CD14-positive monocyte (primary cell): ENCODE measurements at regions of chr22 and their contacts with region 1.

Region 1: GRCh38 chr22:39532215-39533071 is at the start of gene RPS19BP1:
- DNase-seq: peak; percentile 96 to 98 (median 96)
- H3K4me3 ChIP-seq: peak within 1 kb of the TSS; percentile 77 to 90 (median 81)
- H3K4me3 Mint-ChIP-seq: peak within 1 kb of the TSS; percentile 85 to 94
- H3K27ac ChIP-seq: peak within 1 kb of the TSS; percentile 75 to 85
- H3K27ac Mint-ChIP-seq: peak within 1 kb of the TSS; percentile 85 to 94 (median 90)
- H3K4me1 ChIP-seq: peaks cover 48 to 61% of the 10 kb centered on the region in 2 donors
- H3K4me1 Mint-ChIP-seq: peaks cover 51% of the 10 kb centered on the region
- H3K27me3 ChIP-seq: no peaks in the 10 kb centered on the region
- H3K27me3 Mint-ChIP-seq: peaks cover 0 to 3% (median 2%) of the 10 kb centered on the region in 3 donors
- CTCF ChIP-seq: no peak
- polyA plus RNA-seq, gene RPS19BP1: 59.9 to 106 (median 73.5) TPM

Region 2: DNA sequence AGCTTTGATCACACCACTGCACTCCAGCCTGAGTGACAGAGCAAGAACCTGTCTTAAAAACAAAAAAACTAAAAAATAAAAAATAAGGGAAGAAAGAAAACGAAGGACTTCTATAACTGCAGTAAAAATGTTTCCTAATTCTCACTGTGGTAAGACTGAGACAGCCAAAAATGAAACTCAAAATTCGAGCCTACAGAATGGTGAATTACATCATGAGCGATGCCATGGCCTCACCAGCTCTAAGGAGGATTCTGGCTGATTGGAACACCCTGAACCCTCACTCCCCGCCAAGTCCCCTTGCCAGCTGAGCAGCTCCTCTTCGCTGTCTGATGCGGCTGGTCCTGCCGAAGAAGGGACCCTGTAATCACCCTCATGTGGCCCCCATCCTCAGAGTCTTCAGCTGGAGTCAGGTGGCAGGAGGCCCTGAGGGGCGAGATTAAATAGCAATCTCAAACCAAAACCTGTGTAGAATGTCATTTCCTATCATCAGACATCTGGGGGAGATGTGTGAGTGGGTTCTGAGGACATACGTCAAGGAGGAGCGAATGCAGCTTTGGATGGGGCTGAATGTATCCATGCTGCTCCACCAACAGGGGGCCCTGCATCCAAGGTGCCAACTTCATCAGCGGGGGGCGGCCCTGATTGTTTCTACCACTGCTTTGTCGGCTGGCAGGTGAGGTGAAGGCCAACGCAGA is 316.9 kb before region 1 on chr22:
- intact Hi-C with region 1: no loop called
- DNase-seq: peak in 1 of 3 donors; percentile 27
- H3K4me3 ChIP-seq: no peak overlapping the region
- H3K4me3 Mint-ChIP-seq: peak overlapping the region in 1 of 2 donors; percentile 64
- H3K27ac ChIP-seq: no peak overlapping the region
- H3K27ac Mint-ChIP-seq: peak overlapping the region in 1 of 7 donors; percentile 20
- H3K4me1 ChIP-seq: no peaks in the 10 kb centered on the region
- H3K4me1 Mint-ChIP-seq: peaks cover 5% of the 10 kb centered on the region
- H3K27me3 ChIP-seq: peaks cover 2 to 5% of the 10 kb centered on the region in 2 donors
- H3K27me3 Mint-ChIP-seq: peaks cover 18 to 44% (median 36%) of the 10 kb centered on the region in 3 donors
- CTCF ChIP-seq: peak; percentile 53

Region 3: GRCh38 chr22:39490135-39490798 is 42.2 kb before region 1 on chr22:
- intact Hi-C with region 1: loop called (anchors 5 kb)
- DNase-seq: peak; percentile 63 to 82 (median 80)
- H3K4me3 ChIP-seq: peak overlapping the region in 1 of 3 experiments; percentile 63
- H3K4me3 Mint-ChIP-seq: peak overlapping the region; percentile 48 to 60
- H3K27ac ChIP-seq: peak overlapping the region in 1 of 2 donors; percentile 69
- H3K27ac Mint-ChIP-seq: peak overlapping the region in 6 of 7 donors; percentile 37 to 71 (median 67)
- H3K4me1 ChIP-seq: peaks cover 27 to 29% of the 10 kb centered on the region in 2 donors
- H3K4me1 Mint-ChIP-seq: peaks cover 33% of the 10 kb centered on the region
- H3K27me3 ChIP-seq: no peaks in the 10 kb centered on the region
- H3K27me3 Mint-ChIP-seq: peaks cover 0 to 5% (median 4%) of the 10 kb centered on the region in 3 donors
- CTCF ChIP-seq: no peak

Region 4: GRCh38 chr22:40024201-40025061 is 492.0 kb after region 1 on chr22:
- intact Hi-C with region 1: loop called in 1 of 2 experiments (anchors 2 kb)
- DNase-seq: peak; percentile 38 to 68 (median 67)
- H3K4me3 ChIP-seq: no peak overlapping the region
- H3K4me3 Mint-ChIP-seq: no peak overlapping the region
- H3K27ac ChIP-seq: no peak overlapping the region
- H3K27ac Mint-ChIP-seq: no peak overlapping the region
- H3K4me1 ChIP-seq: no peaks in the 10 kb centered on the region
- H3K4me1 Mint-ChIP-seq: no peaks in the 10 kb centered on the region
- H3K27me3 ChIP-seq: no peaks in the 10 kb centered on the region
- H3K27me3 Mint-ChIP-seq: peaks cover 3 to 11% (median 7%) of the 10 kb centered on the region in 3 donors
- CTCF ChIP-seq: peak; percentile 92

Region 5: DNA sequence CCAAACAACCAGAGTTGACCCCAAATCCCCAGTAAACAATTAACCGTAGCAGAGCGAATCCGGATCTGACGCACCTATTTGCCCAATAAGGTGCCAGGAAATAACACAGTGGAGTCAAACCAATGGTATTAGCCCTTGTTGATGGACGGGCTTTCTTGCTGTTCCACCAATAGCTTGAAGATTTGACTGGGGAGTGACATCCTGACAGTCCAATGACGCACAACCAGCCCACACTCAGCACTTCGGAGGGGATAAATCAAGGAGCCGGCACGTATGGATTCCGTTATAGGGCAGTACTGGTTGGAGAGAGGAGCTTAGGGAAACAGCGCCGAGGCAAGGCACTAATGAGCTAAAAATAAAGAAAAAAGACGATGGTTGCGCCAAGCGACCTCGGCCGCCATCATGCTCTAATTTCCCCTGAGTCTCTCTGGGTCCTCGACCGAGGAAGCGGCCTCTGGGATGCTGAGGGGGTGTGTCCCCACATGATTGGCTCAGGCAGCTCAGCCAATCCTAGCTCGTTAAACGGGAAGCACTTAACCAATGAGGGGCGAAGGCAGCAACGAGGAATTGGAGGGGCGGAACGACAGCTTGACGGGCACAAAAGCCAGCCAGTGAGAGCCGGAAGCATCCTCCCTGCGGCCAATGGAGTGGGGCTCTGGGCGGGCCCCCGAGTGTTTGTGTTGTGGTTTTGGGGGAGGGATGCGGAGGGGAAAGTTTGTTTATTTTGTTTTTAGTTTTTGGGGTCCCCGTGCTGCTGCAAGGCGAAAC is 511.8 kb after region 1 on chr22:
- intact Hi-C with region 1: loop called (anchors 5 kb)
- DNase-seq: peak; percentile 98 to 99 (median 99)
- H3K4me3 ChIP-seq: peak overlapping the region; percentile 59 to 95 (median 88)
- H3K4me3 Mint-ChIP-seq: peak overlapping the region; percentile 99
- H3K27ac ChIP-seq: peak overlapping the region; percentile 86 to 99
- H3K27ac Mint-ChIP-seq: peak overlapping the region; percentile 98 to 100 (median 99)
- H3K4me1 ChIP-seq: peaks cover 31 to 41% of the 10 kb centered on the region in 2 donors
- H3K4me1 Mint-ChIP-seq: peaks cover 43% of the 10 kb centered on the region
- H3K27me3 ChIP-seq: no peaks in the 10 kb centered on the region
- H3K27me3 Mint-ChIP-seq: peaks cover 0 to 6% (median 2%) of the 10 kb centered on the region in 3 donors
- CTCF ChIP-seq: no peak

Region 6: DNA sequence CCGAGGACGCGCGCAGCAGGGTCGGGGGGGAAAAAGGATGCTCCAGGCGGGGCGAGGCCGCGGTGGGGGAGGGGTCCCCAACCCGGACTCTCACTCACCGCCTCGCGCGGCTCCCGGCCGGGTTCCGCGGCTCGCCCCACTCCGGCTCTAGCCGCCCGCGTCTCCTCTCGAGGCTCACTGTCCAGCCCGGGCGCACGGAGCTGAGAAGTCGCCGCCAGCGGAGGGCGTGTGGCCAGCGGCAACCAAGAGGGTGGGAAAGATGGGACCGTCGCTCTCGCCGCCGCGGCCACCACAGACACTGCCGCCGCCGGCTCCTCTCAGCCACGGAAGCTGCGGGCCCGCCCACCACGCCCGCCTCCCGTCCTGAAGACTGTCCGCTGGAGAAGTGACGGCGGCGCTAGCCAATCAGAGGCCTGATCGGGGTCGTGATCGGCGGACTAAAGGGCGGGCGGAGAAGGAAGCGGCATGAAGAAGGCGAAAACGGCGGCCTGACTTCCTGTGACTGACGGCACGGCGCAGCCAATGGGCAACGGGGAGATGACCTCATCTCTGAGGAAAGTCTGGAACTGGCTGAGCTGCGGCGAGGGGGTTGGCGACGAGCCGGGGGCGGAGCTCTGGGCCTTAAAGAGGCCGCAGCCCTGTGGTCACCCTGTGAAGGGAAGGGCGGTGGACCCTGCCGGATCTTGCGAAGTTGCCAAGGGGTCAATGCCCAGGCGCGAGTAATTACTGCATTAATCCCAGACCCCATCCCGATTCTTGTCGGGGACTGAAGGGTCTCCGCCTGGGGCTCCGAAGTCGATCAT is 1104.1 kb after region 1 on chr22 and contains the start of gene MRTFA:
- intact Hi-C with region 1: loop called in 1 of 2 experiments (anchors 10 kb)
- DNase-seq: peak; percentile 99 to 100 (median 99)
- H3K4me3 ChIP-seq: peak within 1 kb of the TSS; percentile 67 to 95 (median 79)
- H3K4me3 Mint-ChIP-seq: peak within 1 kb of the TSS; percentile 94 to 96
- H3K27ac ChIP-seq: peak within 1 kb of the TSS; percentile 90 to 93
- H3K27ac Mint-ChIP-seq: peak within 1 kb of the TSS; percentile 97 to 99 (median 99)
- H3K4me1 ChIP-seq: peaks cover 25 to 38% of the 10 kb centered on the region in 2 donors
- H3K4me1 Mint-ChIP-seq: peaks cover 49% of the 10 kb centered on the region
- H3K27me3 ChIP-seq: no peaks in the 10 kb centered on the region
- H3K27me3 Mint-ChIP-seq: peaks cover 0 to 5% (median 2%) of the 10 kb centered on the region in 3 donors
- CTCF ChIP-seq: no peak
- polyA plus RNA-seq, gene MRTFA: 14.1 to 33.8 (median 18.9) TPM